ENCODE measurements at regions of chr1 and their contacts with region 1.

Region 1: GRCh38 chr1:52127181-52128180 is 14.4 kb upstream of the ZFYVE9 start:
- H3K4me3 ChIP-seq: no peak overlapping the region
- H3K27ac ChIP-seq: no peak overlapping the region
- H3K4me1 ChIP-seq: no peaks in the 10 kb centered on the region
- CTCF ChIP-seq: peak; percentile 58; the same call in 1 of the 2 replicates

Region 2: GRCh38 chr1:52080014-52080415 is 47.5 kb before region 1 on chr1:
- CTCF ChIA-PET with region 1: no interaction called
- POLR2A ChIA-PET with region 1: no interaction called
- H3K4me3 ChIP-seq: no peak overlapping the region
- H3K27ac ChIP-seq: no peak overlapping the region
- H3K4me1 ChIP-seq: no peaks in the 10 kb centered on the region
- CTCF ChIP-seq: no peak

Region 3: DNA sequence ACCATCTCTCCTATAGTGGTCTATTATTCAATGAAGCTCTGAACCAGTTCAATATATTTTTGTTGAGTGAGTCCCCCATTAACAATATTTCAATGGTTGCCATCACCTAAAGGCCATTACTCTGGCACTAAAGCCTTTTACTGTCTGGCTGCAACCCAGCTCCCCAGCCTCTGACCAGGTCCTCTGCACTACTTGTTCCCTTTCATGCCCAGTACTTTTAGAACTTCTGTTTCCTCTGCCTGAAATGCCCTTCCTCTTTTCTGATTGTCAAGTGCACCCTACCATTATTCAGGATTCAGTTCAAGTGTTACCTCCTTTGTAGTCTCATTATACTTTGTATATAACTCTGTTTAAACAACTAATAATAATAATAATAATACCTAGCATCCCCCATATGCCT is 16.0 kb before region 1 on chr1:
- CTCF ChIA-PET with region 1: interaction called, 12 read pairs
- POLR2A ChIA-PET with region 1: no interaction called
- H3K4me3 ChIP-seq: no peak overlapping the region
- H3K27ac ChIP-seq: no peak overlapping the region
- H3K4me1 ChIP-seq: no peaks in the 10 kb centered on the region
- CTCF ChIP-seq: no peak

Region 4: DNA sequence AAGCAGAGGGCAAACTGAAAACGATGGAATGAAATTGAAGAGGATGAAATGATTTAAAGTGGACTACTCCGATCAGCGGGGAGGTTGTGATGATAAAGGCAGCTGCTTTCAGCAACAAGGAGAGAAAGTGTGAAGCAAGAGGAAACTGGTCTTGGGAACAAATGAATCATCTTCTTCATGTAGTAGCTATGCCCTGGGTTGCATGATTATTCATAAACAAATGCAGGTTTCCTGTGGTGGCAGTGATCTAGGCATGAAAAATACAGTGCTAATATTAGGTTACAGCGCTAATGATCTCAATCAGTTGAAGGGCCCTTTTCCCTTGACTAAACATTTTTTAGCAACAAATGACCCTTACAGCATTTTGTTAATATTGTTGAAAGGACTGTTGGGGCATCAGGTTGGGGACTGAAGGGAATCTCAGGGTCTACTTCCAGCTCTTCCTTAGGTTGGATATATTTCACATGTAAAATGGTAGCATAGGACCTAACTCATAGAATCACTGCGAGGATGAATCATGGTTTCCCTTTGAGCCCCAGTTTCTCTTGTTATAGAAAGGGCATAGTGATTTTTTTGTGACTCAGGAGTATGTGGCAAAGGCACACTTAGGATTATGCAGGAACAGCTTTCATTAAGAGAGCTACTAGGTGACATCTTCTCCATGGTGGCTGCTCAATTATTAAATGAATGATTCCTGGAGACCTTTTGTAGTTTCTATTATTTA is 12.5 kb after region 1 on chr1:
- CTCF ChIA-PET with region 1: interaction called, 13 read pairs
- POLR2A ChIA-PET with region 1: no interaction called
- H3K4me3 ChIP-seq: no peak overlapping the region
- H3K27ac ChIP-seq: no peak overlapping the region
- H3K4me1 ChIP-seq: peaks cover 7% of the 10 kb centered on the region
- CTCF ChIP-seq: no peak

Region 5: DNA sequence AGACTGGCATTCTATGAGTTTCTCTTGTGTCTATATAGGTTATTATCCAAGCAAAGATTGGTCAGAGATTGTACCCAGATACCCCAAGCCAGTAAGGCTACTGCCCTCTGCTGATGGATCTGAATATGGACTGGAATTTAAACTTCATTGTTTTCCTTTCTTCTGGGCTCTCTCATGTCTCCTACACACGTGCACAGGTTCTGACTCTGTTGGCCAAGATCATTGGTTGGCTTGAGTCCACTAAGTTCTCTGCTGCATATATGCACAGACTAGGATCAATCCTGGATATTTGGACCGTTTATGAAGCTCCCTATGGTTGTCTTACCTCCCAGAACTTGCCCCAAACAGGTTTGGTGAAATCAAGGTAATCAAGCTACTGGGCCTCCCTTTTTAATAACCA is 168.9 kb after region 1 on chr1:
- CTCF ChIA-PET with region 1: interaction called, 20 read pairs
- POLR2A ChIA-PET with region 1: no interaction called
- H3K4me3 ChIP-seq: no peak overlapping the region
- H3K27ac ChIP-seq: no peak overlapping the region
- H3K4me1 ChIP-seq: no peaks in the 10 kb centered on the region
- CTCF ChIP-seq: no peak